ENCODE measurements at regions of chr17 and their contacts with region 1.

Region 1: GRCh38 chr17:76506408-76507349 is 5.5 kb upstream of the RHBDF2 start:
- DNase-seq: peak; percentile 94
- ATAC-seq: peak; percentile 82
- H3K4me3 ChIP-seq: no peak overlapping the region
- H3K27ac ChIP-seq: no peak overlapping the region
- H3K4me1 ChIP-seq: peaks cover 5% of the 10 kb centered on the region; the same call in 1 of the 2 replicates
- H3K27me3 ChIP-seq: no peaks in the 10 kb centered on the region
- CTCF ChIP-seq: peak; percentile 98

Region 2: GRCh38 chr17:76408052-76408849 is 98.4 kb before region 1 on chr17:
- CTCF ChIA-PET with region 1: no interaction called
- POLR2A ChIA-PET with region 1: no interaction called
- intact Hi-C with region 1: loop called (anchors 1 kb)
- DNase-seq: peak; percentile 91
- ATAC-seq: peak; percentile 72
- H3K4me3 ChIP-seq: no peak overlapping the region
- H3K27ac ChIP-seq: no peak overlapping the region
- H3K4me1 ChIP-seq: no peaks in the 10 kb centered on the region
- H3K27me3 ChIP-seq: no peaks in the 10 kb centered on the region
- CTCF ChIP-seq: peak; percentile 99

Region 3: DNA sequence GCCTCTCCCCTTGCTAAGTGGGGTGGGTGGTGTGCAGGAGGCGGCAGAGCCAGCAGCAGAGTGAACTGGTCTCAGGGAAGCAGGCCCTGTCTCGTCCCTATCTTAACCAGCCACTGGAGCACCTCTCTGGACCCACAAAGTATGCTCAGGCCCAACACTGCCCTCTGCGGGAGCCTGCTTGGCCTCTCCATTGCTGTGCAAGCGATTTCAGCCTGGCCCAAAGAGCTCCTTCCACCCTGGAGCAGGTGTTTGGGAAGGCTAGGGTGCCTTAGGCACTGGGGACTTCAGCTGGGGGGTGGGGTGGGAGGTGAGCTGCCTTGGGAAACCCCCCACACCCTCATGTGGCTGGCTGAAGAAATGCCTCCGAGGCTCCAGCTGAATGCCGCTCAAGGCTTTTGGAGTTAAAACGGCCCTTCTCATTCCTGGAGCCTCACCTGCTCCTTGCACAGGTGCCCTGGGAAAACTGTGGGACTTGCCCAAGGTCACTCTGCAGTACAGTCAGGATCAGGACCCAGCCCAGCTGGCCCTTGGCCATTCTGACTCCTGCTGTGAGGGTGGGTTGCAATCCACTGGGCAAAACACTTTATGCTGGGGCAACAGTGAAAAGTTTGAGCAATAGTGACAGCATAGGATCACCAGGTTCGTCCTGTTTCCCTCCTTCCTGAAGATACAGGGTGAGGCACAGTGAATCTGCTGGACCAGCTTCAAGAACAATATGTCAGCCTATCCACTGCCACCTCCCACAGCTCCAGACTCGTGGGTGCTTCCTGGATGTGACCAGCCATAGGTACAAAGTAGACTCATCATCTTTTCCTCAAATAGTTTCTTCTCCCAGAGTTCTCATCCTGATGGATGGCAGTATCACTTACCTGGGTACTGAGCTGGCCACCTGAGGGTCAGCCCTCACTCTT is 47.8 kb before region 1 on chr17:
- CTCF ChIA-PET with region 1: interaction called, 8 read pairs
- POLR2A ChIA-PET with region 1: no interaction called
- intact Hi-C with region 1: loop called (anchors 1 kb)
- DNase-seq: peak; percentile 86
- ATAC-seq: peak; percentile 97
- H3K4me3 ChIP-seq: no peak overlapping the region
- H3K27ac ChIP-seq: no peak overlapping the region
- H3K4me1 ChIP-seq: no peaks in the 10 kb centered on the region
- H3K27me3 ChIP-seq: no peaks in the 10 kb centered on the region
- CTCF ChIP-seq: peak; percentile 91

Region 4: GRCh38 chr17:76467366-76467765 is 39.3 kb before region 1 on chr17 and contains the start of gene AANAT:
- CTCF ChIA-PET with region 1: interaction called, 13 read pairs
- POLR2A ChIA-PET with region 1: no interaction called
- intact Hi-C with region 1: loop called (anchors 1 kb)
- DNase-seq: no peak
- ATAC-seq: no peak
- H3K4me3 ChIP-seq: no peak within 1 kb of the TSS
- H3K27ac ChIP-seq: no peak within 1 kb of the TSS
- H3K4me1 ChIP-seq: no peaks in the 10 kb centered on the region; the same call in 1 of the 2 replicates
- H3K27me3 ChIP-seq: no peaks in the 10 kb centered on the region
- CTCF ChIP-seq: no peak
- total RNA-seq, gene AANAT: not detected in 2 replicates